ENCODE measurements at regions of chr5 and their contacts with region 1.

Region 1: DNA sequence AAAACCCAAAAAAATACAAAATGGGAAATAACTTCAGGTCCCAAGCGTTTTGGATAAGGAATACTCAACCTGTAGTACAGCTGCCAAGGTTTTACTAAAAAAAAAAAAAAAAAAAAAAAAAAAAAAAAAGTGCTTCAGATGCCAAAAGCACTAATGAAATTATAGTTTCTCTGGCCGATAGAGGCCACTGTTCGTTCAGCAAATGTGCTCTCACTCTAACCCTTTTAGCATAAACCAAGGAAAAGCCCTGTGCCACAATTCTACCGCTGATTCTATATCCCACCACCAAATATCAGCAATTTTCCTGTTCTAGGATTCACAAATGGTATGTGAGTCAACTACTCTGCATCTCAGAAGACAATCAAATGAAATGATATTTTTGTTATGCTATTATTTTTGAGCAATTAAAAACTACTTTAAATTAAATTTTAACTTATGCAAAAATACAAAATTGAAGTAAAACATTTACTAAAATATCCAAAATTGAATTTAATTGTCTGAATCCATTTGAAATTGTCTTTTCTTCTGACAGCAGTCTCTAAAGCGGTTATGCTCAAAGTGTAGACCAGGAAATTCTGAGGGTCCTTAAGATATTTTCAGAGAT is 79.8 kb downstream of the RICTOR start:
- DNase-seq: peak in 3 of 5 donors; percentile 30 to 36 (median 31)
- ATAC-seq: peak; percentile 73 to 85 (median 78)
- H3K4me3 ChIP-seq: no peak overlapping the region
- H3K27ac ChIP-seq: no peak overlapping the region
- H3K4me1 ChIP-seq: peaks cover 0 to 17% (median 0%) of the 10 kb centered on the region in 12 donors
- H3K27me3 ChIP-seq: no peaks in the 10 kb centered on the region
- CTCF ChIP-seq: peak; percentile 33 to 70 (median 59)
- POLR2A ChIP-seq: no peak

Region 2: GRCh38 chr5:39080597-39081204 is 86.3 kb after region 1 on chr5:
- intact Hi-C with region 1: loop called in 7 of 10 experiments (anchors 2 to 5 kb)
- DNase-seq: peak in 3 of 5 donors; percentile 49 to 58 (median 55)
- ATAC-seq: peak; percentile 61 to 87 (median 82)
- H3K4me3 ChIP-seq: no peak overlapping the region
- H3K27ac ChIP-seq: no peak overlapping the region
- H3K4me1 ChIP-seq: peaks cover 0 to 25% (median 3%) of the 10 kb centered on the region in 12 donors
- H3K27me3 ChIP-seq: no peaks in the 10 kb centered on the region
- CTCF ChIP-seq: peak; percentile 73 to 94 (median 82)
- POLR2A ChIP-seq: no peak

Region 3: DNA sequence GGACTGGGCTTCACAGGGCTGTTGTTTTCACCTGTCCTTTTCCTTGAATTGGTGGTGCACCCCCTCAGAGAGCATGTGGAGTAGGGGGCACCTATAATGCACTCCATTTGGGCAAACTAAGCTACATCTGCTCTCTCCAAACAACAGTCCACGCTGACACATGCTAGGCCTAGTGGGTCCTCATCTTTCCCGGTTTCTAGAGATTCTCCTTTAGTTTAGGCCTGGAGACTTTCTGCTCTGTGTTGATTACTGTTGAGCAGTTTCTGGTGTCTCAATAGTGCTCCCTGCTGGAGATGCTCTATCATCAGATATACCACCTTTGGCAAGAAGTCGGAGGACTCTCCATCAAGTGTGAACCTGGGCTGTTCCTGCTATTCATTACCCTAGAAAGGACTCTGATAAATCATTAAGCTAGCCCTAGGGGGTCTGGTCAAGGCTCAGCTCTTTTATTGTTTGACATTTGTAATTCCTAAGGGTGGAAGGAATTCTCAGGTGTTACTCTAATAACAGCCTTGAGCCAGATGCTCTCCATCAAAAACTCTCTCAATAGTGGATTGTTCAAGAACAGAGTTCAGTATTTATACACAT is 288.9 kb after region 1 on chr5:
- intact Hi-C with region 1: loop called in 4 of 10 experiments (anchors 10 kb)
- DNase-seq: peak in 2 of 5 donors; percentile 26 to 29
- ATAC-seq: peak; percentile 47 to 90 (median 82)
- H3K4me3 ChIP-seq: no peak overlapping the region
- H3K27ac ChIP-seq: no peak overlapping the region
- H3K4me1 ChIP-seq: peaks cover 0 to 6% (median 0%) of the 10 kb centered on the region in 12 donors
- H3K27me3 ChIP-seq: no peaks in the 10 kb centered on the region
- CTCF ChIP-seq: peak; percentile 38 to 70 (median 58)
- POLR2A ChIP-seq: no peak

Region 4: DNA sequence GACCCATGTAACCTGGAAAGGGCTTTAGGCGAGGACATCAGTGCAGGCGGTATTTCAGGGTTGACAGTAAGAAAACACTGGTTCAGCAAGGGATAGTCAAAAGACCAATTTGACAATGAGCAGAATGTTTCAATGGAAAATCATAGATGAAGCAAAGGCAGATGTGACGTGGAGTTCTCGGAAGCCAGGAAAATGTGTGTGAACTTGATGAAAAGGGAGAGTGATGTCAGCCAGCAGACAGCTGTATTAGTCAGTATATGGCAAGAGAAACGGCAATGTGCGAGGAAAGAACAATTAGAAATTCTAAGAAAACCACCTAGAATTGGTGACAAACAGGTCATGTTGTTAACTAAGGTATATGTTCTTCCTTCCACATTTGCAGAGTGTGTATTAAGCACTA is 934.3 kb after region 1 on chr5:
- intact Hi-C with region 1: no loop called
- DNase-seq: no peak
- ATAC-seq: peak in 2 of 4 donors; percentile 60 to 75
- H3K4me3 ChIP-seq: no peak overlapping the region
- H3K27ac ChIP-seq: no peak overlapping the region
- H3K4me1 ChIP-seq: no peaks in the 10 kb centered on the region
- H3K27me3 ChIP-seq: peaks cover 0 to 5% (median 0%) of the 10 kb centered on the region in 9 donors
- CTCF ChIP-seq: no peak
- POLR2A ChIP-seq: no peak

Measured in heart left ventricle (tissue), 16 donors.